ENCODE measurements at regions of chr3 and their contacts with region 1.

Region 1: DNA sequence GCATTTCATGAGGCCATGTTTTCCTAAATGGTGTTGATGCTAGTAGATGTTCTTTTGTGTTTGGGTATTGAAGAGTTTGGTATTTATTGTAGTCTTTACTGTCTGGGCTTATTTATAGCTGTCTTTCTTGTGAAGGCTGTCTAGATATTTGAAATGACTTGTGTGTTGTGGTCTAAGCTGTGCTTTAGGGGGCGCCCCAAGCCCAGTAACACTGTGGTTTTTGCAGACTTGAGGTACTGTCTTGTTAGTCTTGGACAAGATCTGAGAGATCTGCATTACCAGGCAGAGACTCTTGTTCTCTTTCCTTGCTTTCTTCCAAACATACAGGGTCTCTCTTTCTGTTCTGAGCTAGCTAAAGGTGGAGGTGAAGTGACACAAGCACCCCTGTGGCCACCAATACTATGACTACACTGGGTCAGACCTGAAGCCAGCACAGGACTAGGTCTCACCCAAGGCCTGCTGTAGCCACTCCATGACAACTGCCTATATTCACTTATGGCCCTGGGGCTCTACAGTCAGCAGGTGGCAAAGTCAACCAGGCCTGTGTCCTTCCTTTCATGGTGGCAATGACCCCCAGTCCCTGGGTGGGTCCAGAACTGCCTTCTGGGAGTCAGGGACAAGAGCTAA is 152.1 kb upstream of the TBC1D5 start:
- DNase-seq: peak in 1 of 2 experiments; percentile 62
- ATAC-seq: peak; percentile 47 to 83; a peak in 4 of 6 replicates
- H3K4me3 ChIP-seq: no peak overlapping the region
- H3K27ac ChIP-seq: no peak overlapping the region
- H3K4me1 ChIP-seq: no peaks in the 10 kb centered on the region
- CTCF ChIP-seq: peak; percentile 40
- EP300 ChIP-seq: no peak
- POLR2A ChIP-seq: no peak
- RAD21 ChIP-seq: peak; percentile 70 to 74

Region 2: GRCh38 chr3:17742108-17742879 is 152.3 kb before region 1 on chr3 and contains the start of gene TBC1D5:
- CTCF ChIA-PET with region 1: no interaction called
- POLR2A ChIA-PET with region 1: no interaction called
- DNase-seq: peak; percentile 75 to 98
- ATAC-seq: peak; percentile 84 to 92
- H3K4me3 ChIP-seq: peak within 1 kb of the TSS; percentile 64
- H3K27ac ChIP-seq: peak within 1 kb of the TSS; percentile 96 to 100
- H3K4me1 ChIP-seq: peaks cover 25% of the 10 kb centered on the region
- CTCF ChIP-seq: no peak
- EP300 ChIP-seq: no peak
- POLR2A ChIP-seq: peak; percentile 73; the same call in 1 of the 2 replicates
- RAD21 ChIP-seq: no peak; a peak in 1 of 5 replicates
- polyA plus RNA-seq, gene TBC1D5: 67.3 and 72.2 TPM in 2 replicates

Region 3: GRCh38 chr3:17765819-17766472 is 128.6 kb before region 1 on chr3:
- CTCF ChIA-PET with region 1: no interaction called
- POLR2A ChIA-PET with region 1: no interaction called
- DNase-seq: no peak
- ATAC-seq: no peak
- H3K4me3 ChIP-seq: no peak overlapping the region
- H3K27ac ChIP-seq: no peak overlapping the region
- H3K4me1 ChIP-seq: peaks cover 2% of the 10 kb centered on the region; the same call in 1 of the 3 replicates
- CTCF ChIP-seq: no peak
- EP300 ChIP-seq: no peak
- POLR2A ChIP-seq: no peak
- RAD21 ChIP-seq: no peak

Region 4: GRCh38 chr3:17882981-17883380 is 11.6 kb before region 1 on chr3:
- CTCF ChIA-PET with region 1: interaction called, 11 read pairs
- POLR2A ChIA-PET with region 1: no interaction called
- DNase-seq: no peak
- ATAC-seq: no peak
- H3K4me3 ChIP-seq: no peak overlapping the region
- H3K27ac ChIP-seq: no peak overlapping the region
- H3K4me1 ChIP-seq: no peaks in the 10 kb centered on the region
- CTCF ChIP-seq: no peak
- EP300 ChIP-seq: no peak
- POLR2A ChIP-seq: no peak
- RAD21 ChIP-seq: no peak

Region 5: GRCh38 chr3:18389108-18389733 is 494.7 kb after region 1 on chr3:
- CTCF ChIA-PET with region 1: interaction called, 16 read pairs
- POLR2A ChIA-PET with region 1: no interaction called
- DNase-seq: peak in 1 of 2 experiments; percentile 15
- ATAC-seq: no peak
- H3K4me3 ChIP-seq: no peak overlapping the region
- H3K27ac ChIP-seq: no peak overlapping the region
- H3K4me1 ChIP-seq: no peaks in the 10 kb centered on the region
- CTCF ChIP-seq: peak; percentile 74
- EP300 ChIP-seq: no peak
- POLR2A ChIP-seq: no peak
- RAD21 ChIP-seq: peak; percentile 58 to 66

Measured in A549 (cell line).